WTC11 (cell line): ENCODE measurements at regions of chr17 and their contacts with region 1.

Region 1: DNA sequence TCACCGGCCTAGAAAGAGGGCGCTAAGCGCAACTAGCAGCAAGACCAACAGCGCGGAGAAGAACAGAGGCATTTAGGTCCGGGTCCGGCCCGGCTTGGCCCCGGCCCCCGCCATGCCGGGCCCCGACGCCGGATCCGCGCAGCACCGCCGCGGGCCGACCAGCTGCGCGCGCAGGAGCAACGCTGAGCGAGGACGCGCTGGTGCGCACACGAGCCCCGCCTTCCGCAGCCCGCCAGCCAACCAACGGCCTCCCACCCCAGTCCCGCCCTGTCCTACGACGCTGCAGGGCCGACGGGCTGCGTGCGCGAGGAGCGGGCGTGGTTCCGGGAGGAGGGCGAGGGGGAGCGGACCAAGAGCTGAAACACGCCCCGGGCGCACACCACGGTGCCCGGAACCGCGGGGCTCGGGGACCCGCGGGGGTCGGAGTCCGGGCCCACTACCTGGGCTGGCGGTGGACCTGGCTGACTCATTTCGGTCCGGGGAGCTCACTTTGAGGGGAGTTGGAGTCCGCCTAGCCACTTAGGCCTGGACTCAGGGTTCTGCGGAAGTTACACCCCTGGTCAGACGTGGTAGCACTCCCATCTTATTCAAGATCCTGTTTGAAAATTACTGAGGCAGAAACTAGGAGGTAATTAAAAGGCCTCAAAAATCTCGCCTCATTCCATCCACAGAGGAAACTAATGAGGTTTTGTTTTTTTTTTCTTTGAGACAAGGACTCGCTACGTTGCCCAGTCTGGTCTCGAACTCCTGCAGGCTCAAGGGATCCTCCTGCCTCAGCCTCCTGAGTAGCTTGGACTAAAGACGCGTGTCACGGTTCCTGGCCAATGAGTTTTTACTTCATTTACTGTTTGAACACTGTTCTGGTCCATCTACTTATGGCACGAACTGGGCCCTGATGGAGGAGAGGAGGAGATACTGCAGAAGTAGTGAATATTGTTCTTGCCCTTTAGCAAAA is at the start of gene BLTP2:
- DNase-seq: peak; percentile 95
- ATAC-seq: peak; percentile 98
- H3K4me3 Mint-ChIP-seq: peak within 1 kb of the TSS; percentile 93
- H3K27ac Mint-ChIP-seq: peak within 1 kb of the TSS; percentile 96
- H3K4me1 Mint-ChIP-seq: peaks cover 24% of the 10 kb centered on the region
- H3K27me3 Mint-ChIP-seq: no peaks in the 10 kb centered on the region
- CTCF ChIP-seq: no peak
- total RNA-seq, gene BLTP2: 111 to 139 TPM (median 116 TPM) in 3 replicates

Region 2: DNA sequence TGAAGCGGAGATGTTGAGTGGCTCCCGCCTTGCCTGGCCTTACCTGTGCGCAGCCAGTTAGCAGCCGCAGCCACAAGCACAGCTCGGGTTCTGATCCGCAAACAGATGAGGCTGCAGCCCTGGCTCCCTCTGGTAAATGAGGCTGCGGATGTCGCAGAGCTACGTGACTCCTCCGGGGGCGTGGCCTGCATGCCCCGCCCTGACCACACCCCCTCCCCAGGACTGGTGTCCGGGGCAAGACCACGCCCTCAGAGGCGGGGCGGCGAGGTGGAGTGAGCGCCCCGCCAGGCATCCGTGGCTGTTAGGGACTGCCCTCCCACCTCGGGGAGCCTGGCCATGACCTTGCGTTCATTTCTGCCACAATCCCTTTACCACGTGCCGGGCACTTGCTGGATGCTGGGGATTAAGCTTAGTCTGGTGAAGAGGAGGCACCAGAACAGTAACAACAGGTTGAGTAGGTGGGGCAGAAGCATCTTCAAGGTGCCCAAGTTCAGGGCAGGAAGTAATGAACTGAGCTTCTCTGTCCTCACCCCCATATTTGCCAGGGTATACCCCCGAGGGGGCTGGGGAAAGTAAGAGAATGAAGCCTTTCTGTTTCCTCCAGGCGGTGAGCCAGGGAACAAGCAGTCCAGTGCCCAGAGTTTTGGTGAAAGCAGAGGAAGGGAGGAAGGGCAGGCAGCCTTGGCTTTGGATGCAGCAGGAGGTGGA is 68.3 kb before region 1 on chr17 and contains the start of gene ALDOC:
- CTCF ChIA-PET with region 1: interaction called, 19 read pairs
- POLR2A ChIA-PET with region 1: interaction called, 3 read pairs
- DNase-seq: peak; percentile 99
- ATAC-seq: peak; percentile 90
- H3K4me3 Mint-ChIP-seq: peak within 1 kb of the TSS; percentile 75
- H3K27ac Mint-ChIP-seq: peak within 1 kb of the TSS; percentile 97
- H3K4me1 Mint-ChIP-seq: peaks cover 16% of the 10 kb centered on the region
- H3K27me3 Mint-ChIP-seq: peaks cover 3% of the 10 kb centered on the region; the same call in 1 of the 2 replicates
- CTCF ChIP-seq: no peak
- total RNA-seq, gene ALDOC: 73.5 to 95.7 TPM (median 94.2 TPM) in 3 replicates

Region 3: DNA sequence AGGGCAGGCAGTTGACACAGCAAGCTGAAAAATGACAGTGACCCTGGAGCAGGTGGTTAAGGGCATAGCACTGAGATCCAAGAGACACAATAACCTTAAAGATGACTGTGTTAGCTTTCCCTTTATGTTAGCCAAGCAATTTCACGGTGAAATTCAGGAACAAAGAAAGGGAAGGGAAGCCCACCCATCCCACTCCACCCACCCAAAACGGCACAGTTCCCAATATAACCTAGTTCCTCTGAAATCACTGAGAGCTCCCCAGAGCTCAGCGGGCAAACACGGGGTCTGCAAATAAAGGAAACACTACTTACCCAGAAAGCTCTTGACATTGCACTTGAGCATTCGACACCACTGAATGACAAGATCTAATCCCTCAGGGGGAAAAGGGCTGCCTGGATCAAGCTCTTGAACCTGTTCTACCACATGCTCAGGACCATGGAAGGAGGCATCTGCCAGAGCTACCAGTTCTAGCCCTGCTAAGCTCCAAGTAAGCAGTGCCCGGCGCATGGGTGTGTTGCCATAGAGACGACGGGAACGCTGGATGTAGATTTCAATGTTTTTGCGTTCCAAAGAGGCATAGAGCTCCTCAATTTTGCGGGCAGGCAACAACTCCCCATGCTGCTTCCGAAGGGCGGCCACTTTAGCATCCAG is 10.9 kb before region 1 on chr17:
- CTCF ChIA-PET with region 1: interaction called, 14 read pairs
- POLR2A ChIA-PET with region 1: interaction called, 4 read pairs
- DNase-seq: no peak
- ATAC-seq: no peak
- H3K4me3 Mint-ChIP-seq: no peak overlapping the region
- H3K27ac Mint-ChIP-seq: no peak overlapping the region
- H3K4me1 Mint-ChIP-seq: no peaks in the 10 kb centered on the region
- H3K27me3 Mint-ChIP-seq: no peaks in the 10 kb centered on the region
- CTCF ChIP-seq: no peak

Region 4: DNA sequence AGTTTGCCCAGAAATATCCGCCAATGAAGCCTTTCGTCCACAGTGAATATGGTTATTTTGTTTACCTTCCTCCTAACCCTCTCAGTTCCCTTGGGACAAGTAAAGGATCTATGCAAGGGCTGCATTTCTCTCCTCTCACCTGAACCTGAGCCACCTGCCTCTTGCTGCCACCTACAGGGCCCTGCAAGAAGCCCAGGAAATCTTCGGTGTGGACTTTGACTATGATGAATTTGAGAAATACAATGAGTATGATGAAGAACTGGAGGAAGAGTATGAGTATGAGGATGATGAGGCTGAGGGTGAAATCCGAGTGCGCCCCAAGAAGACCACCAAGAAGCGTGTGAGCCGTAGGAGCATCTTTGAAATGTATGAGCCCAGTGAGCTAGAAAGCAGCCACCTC is 30.7 kb after region 1 on chr17:
- CTCF ChIA-PET with region 1: interaction called, 11 read pairs
- POLR2A ChIA-PET with region 1: no interaction called
- DNase-seq: no peak
- ATAC-seq: peak; percentile 57
- H3K4me3 Mint-ChIP-seq: no peak overlapping the region
- H3K27ac Mint-ChIP-seq: no peak overlapping the region
- H3K4me1 Mint-ChIP-seq: no peaks in the 10 kb centered on the region
- H3K27me3 Mint-ChIP-seq: no peaks in the 10 kb centered on the region
- CTCF ChIP-seq: 0 out of 2 replicates have a peak, but pooled peaks have one; percentile 6

Region 5: GRCh38 chr17:28842282-28843012 is 197.2 kb after region 1 on chr17 and contains the start of gene FAM222B:
- CTCF ChIA-PET with region 1: no interaction called
- POLR2A ChIA-PET with region 1: no interaction called
- DNase-seq: peak; percentile 89
- ATAC-seq: peak; percentile 99
- H3K4me3 Mint-ChIP-seq: peak within 1 kb of the TSS; percentile 96
- H3K27ac Mint-ChIP-seq: peak within 1 kb of the TSS; percentile 95
- H3K4me1 Mint-ChIP-seq: peaks cover 15% of the 10 kb centered on the region
- H3K27me3 Mint-ChIP-seq: no peaks in the 10 kb centered on the region
- CTCF ChIP-seq: no peak
- total RNA-seq, gene FAM222B: 86.6 to 94.6 TPM (median 91.5 TPM) in 3 replicates

Region 6: GRCh38 chr17:28918295-28918694 is 273.0 kb after region 1 on chr17:
- CTCF ChIA-PET with region 1: no interaction called
- POLR2A ChIA-PET with region 1: no interaction called
- DNase-seq: no peak
- ATAC-seq: no peak
- H3K4me3 Mint-ChIP-seq: no peak overlapping the region
- H3K27ac Mint-ChIP-seq: no peak overlapping the region
- H3K4me1 Mint-ChIP-seq: no peaks in the 10 kb centered on the region
- H3K27me3 Mint-ChIP-seq: no peaks in the 10 kb centered on the region
- CTCF ChIP-seq: no peak